ENCODE measurements at regions of chr16 and their contacts with region 1.

Region 1: GRCh38 chr16:87778830-87779579 is 13.2 kb upstream of the KLHDC4 start:
- H3K4me3 Mint-ChIP-seq: peak overlapping the region; percentile 34
- H3K27ac Mint-ChIP-seq: peak overlapping the region; percentile 74
- H3K4me1 Mint-ChIP-seq: peaks cover 48% of the 10 kb centered on the region
- H3K27me3 Mint-ChIP-seq: peaks cover 9% of the 10 kb centered on the region

Region 2: DNA sequence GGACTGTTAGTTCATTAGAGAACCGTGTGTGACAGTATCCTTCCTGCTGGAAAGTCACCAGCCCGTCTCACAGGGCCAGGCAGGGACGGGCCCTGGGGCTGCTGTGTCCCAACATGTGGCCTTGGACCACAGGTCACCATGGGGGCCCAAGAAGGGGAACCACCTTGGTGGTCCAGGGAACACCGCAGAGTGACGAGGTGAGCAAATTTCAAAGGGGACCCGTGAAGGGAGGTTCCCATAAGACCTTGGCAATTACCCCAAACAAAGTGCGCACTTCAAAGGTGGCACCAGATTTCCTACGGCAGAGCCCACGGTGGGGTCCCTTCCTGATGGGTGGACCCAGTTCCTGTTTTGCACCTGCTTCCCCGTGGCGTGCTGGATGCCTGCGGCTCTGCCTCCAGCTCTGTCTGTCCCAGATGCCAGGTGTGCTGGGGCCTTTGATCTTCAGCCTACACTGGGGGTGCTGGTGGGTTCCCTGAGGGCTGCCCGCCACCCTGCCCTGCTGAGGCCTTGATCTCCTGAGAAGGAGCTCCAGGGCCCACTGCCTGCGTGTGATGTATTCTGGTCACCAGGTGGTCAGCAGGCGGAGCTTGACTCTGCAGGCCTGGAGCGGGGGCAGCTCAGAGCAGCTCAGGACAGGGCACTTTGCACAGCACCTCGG is 63.3 kb after region 1 on chr16:
- intact Hi-C with region 1: no loop called
- H3K4me3 Mint-ChIP-seq: no peak overlapping the region
- H3K27ac Mint-ChIP-seq: no peak overlapping the region
- H3K4me1 Mint-ChIP-seq: peaks cover under 1% of the 10 kb centered on the region
- H3K27me3 Mint-ChIP-seq: no peaks in the 10 kb centered on the region

Region 3: GRCh38 chr16:87853411-87854052 is 74.5 kb after region 1 on chr16:
- intact Hi-C with region 1: loop called (anchors 5 kb)
- H3K4me3 Mint-ChIP-seq: peak overlapping the region; percentile 54
- H3K27ac Mint-ChIP-seq: peak overlapping the region; percentile 74
- H3K4me1 Mint-ChIP-seq: peaks cover 63% of the 10 kb centered on the region
- H3K27me3 Mint-ChIP-seq: peaks cover 10% of the 10 kb centered on the region

Region 4: GRCh38 chr16:87874639-87875465 is 95.8 kb after region 1 on chr16:
- intact Hi-C with region 1: loop called (anchors 1 kb)
- H3K4me3 Mint-ChIP-seq: no peak overlapping the region
- H3K27ac Mint-ChIP-seq: no peak overlapping the region
- H3K4me1 Mint-ChIP-seq: peaks cover 22% of the 10 kb centered on the region
- H3K27me3 Mint-ChIP-seq: peaks cover 26% of the 10 kb centered on the region

Region 5: GRCh38 chr16:88005181-88005581 is 226.2 kb after region 1 on chr16:
- intact Hi-C with region 1: loop called (anchors 2 kb)
- H3K4me3 Mint-ChIP-seq: no peak overlapping the region
- H3K27ac Mint-ChIP-seq: no peak overlapping the region
- H3K4me1 Mint-ChIP-seq: peaks cover 21% of the 10 kb centered on the region
- H3K27me3 Mint-ChIP-seq: no peaks in the 10 kb centered on the region

Measured in dendritic cell treated with granulocyte-macrophage colony-stimulating factor and Interleukin-4, amounts not matched to agents 40 ng/mL and 50 ng/mL, for 4 days (primary cell).